Ascending aorta (tissue), 2 donors: ENCODE measurements at regions of chr2 and their contacts with region 1.

Region 1: GRCh38 chr2:47767880-47768609 is 14.9 kb upstream of the MSH6 start:
- DNase-seq: peak in 1 of 2 donors; percentile 79
- H3K4me3 ChIP-seq: peak overlapping the region in 1 of 2 donors; percentile 26
- H3K27ac ChIP-seq: no peak overlapping the region
- H3K4me1 ChIP-seq: peaks cover 0 to 5% of the 10 kb centered on the region in 2 donors
- H3K27me3 ChIP-seq: no peaks in the 10 kb centered on the region
- CTCF ChIP-seq: peak; percentile 92 to 99 (median 99)

Region 2: GRCh38 chr2:47339745-47340541 is 428.1 kb before region 1 on chr2:
- intact Hi-C with region 1: loop called (anchors 5 kb)
- DNase-seq: no peak
- H3K4me3 ChIP-seq: no peak overlapping the region
- H3K27ac ChIP-seq: no peak overlapping the region
- H3K4me1 ChIP-seq: peaks cover 0 to 8% of the 10 kb centered on the region in 2 donors
- H3K27me3 ChIP-seq: no peaks in the 10 kb centered on the region
- CTCF ChIP-seq: no peak

Region 3: DNA sequence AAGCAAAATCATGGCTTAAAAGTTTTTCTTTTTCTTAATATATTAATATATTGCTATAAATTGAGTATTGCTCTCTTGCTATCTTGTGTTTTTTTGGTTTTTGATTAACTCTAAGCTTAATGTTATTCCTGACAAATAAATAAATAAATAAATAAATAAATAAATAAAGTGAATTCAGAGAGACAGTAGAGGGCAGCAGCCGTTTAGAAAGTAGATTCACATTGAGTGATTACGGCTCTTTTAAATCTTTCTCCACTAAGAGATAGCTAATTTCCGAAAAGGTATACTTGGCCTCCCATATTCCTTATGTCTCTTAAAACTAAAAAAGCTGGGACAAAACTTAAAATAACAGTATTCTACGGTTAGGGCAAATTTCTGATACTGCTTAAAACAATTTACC is 330.8 kb before region 1 on chr2:
- intact Hi-C with region 1: loop called (anchors 1 kb)
- DNase-seq: no peak
- H3K4me3 ChIP-seq: no peak overlapping the region
- H3K27ac ChIP-seq: no peak overlapping the region
- H3K4me1 ChIP-seq: peaks cover 0 to 7% of the 10 kb centered on the region in 2 donors
- H3K27me3 ChIP-seq: no peaks in the 10 kb centered on the region
- CTCF ChIP-seq: peak in 2 of 3 experiments; percentile 55 to 64